ENCODE measurements at regions of chr4 and their contacts with region 1.

Region 1: DNA sequence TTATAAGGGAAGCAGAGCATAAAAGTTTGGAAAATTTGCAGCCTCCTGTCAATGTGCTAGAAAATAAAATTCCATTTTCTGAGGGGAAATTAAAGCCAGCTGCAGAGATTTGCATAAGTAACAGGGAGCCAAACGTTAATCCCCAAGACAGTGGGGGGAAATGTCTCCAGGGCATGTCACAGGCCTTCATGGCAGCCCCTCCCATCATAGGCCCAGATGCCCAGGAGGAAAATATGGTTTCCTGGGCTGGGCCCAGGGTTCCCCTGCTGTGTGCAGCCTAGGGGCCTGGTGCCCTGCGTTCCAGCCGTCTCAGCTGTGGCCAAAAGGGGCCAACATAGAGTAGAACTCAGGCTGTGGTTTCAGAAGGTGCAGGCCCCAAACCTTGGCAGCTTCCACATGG is 9.3 kb downstream of the RNF4 start:
- DNase-seq: no peak
- H3K4me3 ChIP-seq: no peak overlapping the region
- H3K27ac ChIP-seq: no peak overlapping the region
- H3K4me1 ChIP-seq: peaks cover 5 to 21% of the 10 kb centered on the region in 2 donors
- H3K27me3 ChIP-seq: no peaks in the 10 kb centered on the region
- CTCF ChIP-seq: no peak
- POLR2A ChIP-seq: no peak

Region 2: DNA sequence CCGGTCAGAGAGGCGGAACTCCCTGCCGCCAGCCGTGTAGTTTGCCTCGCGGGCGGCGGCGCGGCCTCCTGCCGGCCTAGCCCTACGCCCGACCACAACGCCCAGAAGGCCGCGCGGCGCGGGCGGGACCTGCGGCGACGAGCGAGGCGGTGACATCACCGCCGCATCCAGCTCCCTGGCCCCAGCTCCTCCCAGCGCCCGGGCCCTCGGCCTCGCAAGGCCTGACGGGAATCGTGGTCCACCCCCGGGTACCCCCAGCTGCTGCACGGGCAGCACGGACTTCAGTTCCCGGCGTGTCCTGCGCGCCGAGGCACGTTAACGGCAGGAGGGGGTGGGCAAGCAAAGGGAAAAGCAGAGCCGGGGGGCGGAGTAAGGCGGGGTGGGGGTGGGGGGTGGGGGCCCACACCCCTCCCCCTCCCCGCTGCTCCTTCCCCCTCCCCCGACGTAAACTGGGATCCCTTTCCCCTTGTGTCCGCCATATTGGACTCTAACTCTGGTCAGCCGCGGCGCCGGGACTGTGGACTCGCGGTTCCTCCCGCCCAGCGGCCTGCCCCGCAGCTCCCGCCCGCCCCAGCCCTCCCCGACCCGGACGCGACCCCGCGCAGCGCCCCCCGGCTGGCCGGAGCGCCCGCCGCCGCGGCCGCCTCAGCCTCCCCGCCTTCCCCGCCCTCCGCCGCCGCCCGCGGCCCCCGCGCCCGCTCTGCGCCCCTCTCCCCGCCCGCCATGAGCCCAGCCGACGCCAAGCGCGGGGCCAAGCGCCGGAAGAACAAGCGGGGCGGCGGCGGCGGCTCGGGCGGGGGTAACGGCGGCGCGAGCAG is 58.2 kb after region 1 on chr4 and contains the start of gene FAM193A:
- intact Hi-C with region 1: loop called (anchors 5 kb)
- DNase-seq: peak; percentile 99
- H3K4me3 ChIP-seq: peak within 1 kb of the TSS; percentile 70 to 98 (median 76)
- H3K27ac ChIP-seq: peak within 1 kb of the TSS; percentile 91 to 99
- H3K4me1 ChIP-seq: peaks cover 0 to 4% of the 10 kb centered on the region in 2 donors
- H3K27me3 ChIP-seq: no peaks in the 10 kb centered on the region
- CTCF ChIP-seq: no peak
- POLR2A ChIP-seq: no peak
- total RNA-seq, gene FAM193A: 24.5 to 26.5 (median 24.7) TPM

Measured in breast epithelium (tissue), 4 donors.